Uterus (tissue), 4 donors: ENCODE measurements at regions of chr17 and their contacts with region 1.

Region 1: GRCh38 chr17:59331129-59331928 is at the start of gene YPEL2:
- DNase-seq: peak; percentile 95 to 97
- H3K4me3 ChIP-seq: peak within 1 kb of the TSS; percentile 84 to 86
- H3K27ac ChIP-seq: peak within 1 kb of the TSS; percentile 95 to 97
- H3K4me1 ChIP-seq: peaks cover 5 to 17% of the 10 kb centered on the region in 2 donors
- H3K27me3 ChIP-seq: no peaks in the 10 kb centered on the region
- CTCF ChIP-seq: no peak
- POLR2A ChIP-seq: peak; percentile 90 to 94
- total RNA-seq, gene YPEL2: 21.2 to 91.7 (median 25.0) TPM

Region 2: GRCh38 chr17:59378458-59379074 is 47.2 kb after region 1 on chr17:
- intact Hi-C with region 1: no loop called
- DNase-seq: peak; percentile 30 to 60
- H3K4me3 ChIP-seq: no peak overlapping the region
- H3K27ac ChIP-seq: peak overlapping the region; percentile 91 to 96
- H3K4me1 ChIP-seq: peaks cover 3 to 14% of the 10 kb centered on the region in 2 donors
- H3K27me3 ChIP-seq: no peaks in the 10 kb centered on the region
- CTCF ChIP-seq: no peak
- POLR2A ChIP-seq: no peak

Region 3: GRCh38 chr17:59427425-59427921 is 96.1 kb after region 1 on chr17:
- intact Hi-C with region 1: loop called (anchors 5 kb)
- DNase-seq: peak in 1 of 2 donors; percentile 36
- H3K4me3 ChIP-seq: no peak overlapping the region
- H3K27ac ChIP-seq: peak overlapping the region; percentile 86 to 94
- H3K4me1 ChIP-seq: peaks cover 21 to 22% of the 10 kb centered on the region in 2 donors
- H3K27me3 ChIP-seq: no peaks in the 10 kb centered on the region
- CTCF ChIP-seq: no peak
- POLR2A ChIP-seq: no peak

Region 4: GRCh38 chr17:59521204-59522126 is 190.1 kb after region 1 on chr17:
- intact Hi-C with region 1: no loop called
- DNase-seq: peak; percentile 19 to 36
- H3K4me3 ChIP-seq: no peak overlapping the region
- H3K27ac ChIP-seq: no peak overlapping the region
- H3K4me1 ChIP-seq: no peaks in the 10 kb centered on the region
- H3K27me3 ChIP-seq: no peaks in the 10 kb centered on the region
- CTCF ChIP-seq: peak; percentile 58 to 76 (median 62)
- POLR2A ChIP-seq: no peak

Region 5: DNA sequence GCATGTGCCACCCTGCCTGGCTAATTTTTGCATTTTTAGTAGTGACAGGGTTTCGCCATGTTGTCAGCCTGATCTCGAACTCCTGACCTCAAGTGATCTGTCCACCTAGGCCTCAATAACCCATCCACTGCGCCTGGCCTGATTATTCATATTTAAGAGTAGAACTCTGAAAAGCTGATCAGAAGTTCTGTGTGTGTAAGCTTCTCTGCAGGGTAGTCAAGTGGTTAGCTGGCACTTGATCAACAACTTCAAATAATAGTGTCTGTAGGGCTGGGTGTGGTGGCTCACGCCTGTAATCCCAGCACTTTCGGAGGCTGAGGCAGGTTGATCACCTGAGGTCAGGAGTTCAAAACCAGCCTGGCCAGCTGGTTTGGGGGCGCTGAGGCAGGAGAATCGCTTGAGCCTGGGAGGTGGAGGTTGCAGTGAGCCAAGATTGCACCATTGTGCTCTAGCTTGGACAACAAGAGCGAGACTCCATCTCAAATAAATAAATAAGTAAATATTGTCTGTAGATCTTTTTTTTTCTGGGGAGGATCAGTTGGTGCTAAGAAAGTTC is 587.7 kb after region 1 on chr17:
- intact Hi-C with region 1: no loop called
- DNase-seq: no peak
- H3K4me3 ChIP-seq: no peak overlapping the region
- H3K27ac ChIP-seq: no peak overlapping the region
- H3K4me1 ChIP-seq: no peaks in the 10 kb centered on the region
- H3K27me3 ChIP-seq: no peaks in the 10 kb centered on the region
- CTCF ChIP-seq: no peak
- POLR2A ChIP-seq: no peak